ENCODE measurements at regions of chr2 and their contacts with region 1.

Region 1: DNA sequence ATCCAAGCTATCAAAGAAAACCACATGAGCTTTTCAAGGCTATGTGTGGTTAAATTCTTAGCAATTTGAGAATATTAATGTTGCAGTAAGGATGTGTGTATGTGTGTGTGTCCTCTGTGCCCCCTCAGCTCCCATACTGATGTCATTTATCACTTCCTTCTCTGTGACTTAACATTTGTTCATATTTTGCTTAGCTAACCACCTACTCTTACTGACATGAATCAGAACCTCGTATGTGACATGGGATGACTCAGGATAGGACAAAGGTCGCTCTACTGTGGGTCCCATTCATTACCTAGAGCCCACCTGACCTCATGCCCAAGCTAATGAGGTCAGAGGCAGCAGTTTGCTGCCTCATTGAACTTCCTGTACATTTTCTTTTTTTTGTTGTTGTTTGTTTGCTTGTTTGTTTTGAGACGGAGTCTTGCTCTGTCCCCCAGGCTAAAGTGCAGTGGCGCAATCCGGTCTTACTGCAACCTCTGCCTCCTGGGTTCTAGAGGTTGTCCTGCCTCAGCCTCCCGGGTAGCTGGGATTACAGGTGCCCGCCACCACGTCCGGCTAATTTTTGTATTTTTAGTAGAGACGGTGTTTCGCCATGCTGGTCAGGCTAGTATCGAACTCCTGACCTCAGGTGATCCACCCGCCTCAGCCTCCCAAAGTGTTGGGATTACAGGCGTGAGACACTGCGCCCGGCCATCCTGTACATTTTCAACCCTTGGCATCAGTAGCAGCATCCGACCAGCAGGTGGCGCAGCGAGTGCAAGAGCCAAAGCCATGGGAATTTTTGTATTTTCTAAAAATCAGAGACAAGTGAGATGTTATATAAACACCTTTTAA is 36.4 kb downstream of the MOGAT1 start:
- DNase-seq: no peak
- H3K4me3 ChIP-seq: no peak overlapping the region
- H3K27ac ChIP-seq: no peak overlapping the region
- H3K4me1 ChIP-seq: peaks cover 0 to 21% (median 7%) of the 10 kb centered on the region in 3 donors
- H3K27me3 ChIP-seq: no peaks in the 10 kb centered on the region
- CTCF ChIP-seq: peak; percentile 94 to 99 (median 96)
- POLR2A ChIP-seq: no peak

Region 2: GRCh38 chr2:222860740-222861410 is 153.0 kb after region 1 on chr2 and contains the start of gene ACSL3:
- intact Hi-C with region 1: loop called (anchors 5 kb)
- DNase-seq: peak; percentile 76
- H3K4me3 ChIP-seq: peak within 1 kb of the TSS; percentile 83 to 99 (median 98)
- H3K27ac ChIP-seq: peak within 1 kb of the TSS; percentile 93 to 98 (median 97)
- H3K4me1 ChIP-seq: peaks cover 12 to 57% (median 28%) of the 10 kb centered on the region in 3 donors
- H3K27me3 ChIP-seq: no peaks in the 10 kb centered on the region
- CTCF ChIP-seq: peak in 3 of 6 experiments; percentile 6 to 15 (median 13)
- POLR2A ChIP-seq: peak; percentile 43 to 100 (median 98)
- total RNA-seq, gene ACSL3: 62.4 to 84.6 (median 76.6) TPM